AG04450 (cell line): ENCODE measurements at regions of chr10 and their contacts with region 1.

Region 1: GRCh38 chr10:79266543-79267312 is 80.5 kb upstream of the PPIF start:
- DNase-seq: peak; percentile 74
- H3K4me3 ChIP-seq: no peak overlapping the region
- H3K27ac ChIP-seq: peak overlapping the region; percentile 93
- H3K27me3 ChIP-seq: no peaks in the 10 kb centered on the region
- CTCF ChIP-seq: no peak

Region 2: GRCh38 chr10:79238574-79238973 is 28.2 kb before region 1 on chr10:
- CTCF ChIA-PET with region 1: interaction called, 10 read pairs
- POLR2A ChIA-PET with region 1: no interaction called
- DNase-seq: no peak
- H3K4me3 ChIP-seq: no peak overlapping the region
- H3K27ac ChIP-seq: peak overlapping the region; percentile 47
- H3K27me3 ChIP-seq: no peaks in the 10 kb centered on the region
- CTCF ChIP-seq: no peak

Region 3: DNA sequence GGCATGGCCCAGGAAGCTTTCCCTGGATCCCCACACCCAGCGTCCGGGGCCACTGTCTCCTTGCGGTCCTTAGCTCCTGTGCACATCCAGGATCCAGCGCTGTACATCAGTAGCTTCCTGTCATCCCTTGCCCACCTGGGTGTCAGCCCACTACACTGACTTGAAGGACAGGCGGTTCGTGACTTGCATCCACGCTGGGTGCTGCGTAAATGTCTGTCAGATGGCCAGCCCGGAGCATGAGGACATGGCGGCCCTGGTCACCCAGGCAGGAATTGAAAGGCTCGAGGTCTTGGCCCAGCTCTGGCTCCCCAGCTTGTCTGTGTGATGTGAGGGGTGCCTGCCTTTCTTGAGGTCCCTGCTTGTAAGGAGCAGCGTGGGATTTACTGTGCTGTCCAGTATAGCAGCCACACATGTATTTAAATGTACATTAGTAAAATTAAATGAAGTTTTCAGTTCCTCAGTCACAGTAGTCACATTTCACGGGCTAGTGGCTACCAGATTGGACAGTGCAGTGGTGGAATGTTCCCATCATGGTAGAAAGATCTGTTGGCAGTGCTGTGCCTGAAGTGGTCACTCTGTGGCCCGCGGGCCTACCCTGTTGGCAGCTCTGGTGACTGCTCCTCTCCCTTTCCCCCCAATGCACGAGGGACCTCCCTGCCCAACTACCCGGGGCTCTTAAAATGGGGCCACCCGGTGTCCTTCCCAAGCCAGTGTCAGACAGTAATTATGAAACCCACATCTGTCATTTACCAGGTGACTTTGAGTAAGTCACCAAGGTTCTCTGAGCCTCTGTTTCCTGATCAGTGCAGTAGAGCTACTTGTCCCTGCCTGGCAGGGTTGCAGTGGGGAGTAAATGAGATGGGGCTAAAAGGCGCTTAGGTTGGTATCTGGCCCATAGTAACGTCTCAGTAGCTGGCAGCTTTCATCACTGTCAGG is 17.3 kb before region 1 on chr10:
- CTCF ChIA-PET with region 1: no interaction called
- POLR2A ChIA-PET with region 1: no interaction called
- DNase-seq: no peak
- H3K4me3 ChIP-seq: no peak overlapping the region
- H3K27ac ChIP-seq: no peak overlapping the region
- H3K27me3 ChIP-seq: no peaks in the 10 kb centered on the region
- CTCF ChIP-seq: no peak

Region 4: GRCh38 chr10:79292891-79293746 is 26.4 kb after region 1 on chr10:
- CTCF ChIA-PET with region 1: no interaction called
- POLR2A ChIA-PET with region 1: no interaction called
- DNase-seq: no peak
- H3K4me3 ChIP-seq: no peak overlapping the region
- H3K27ac ChIP-seq: peak overlapping the region; percentile 47
- H3K27me3 ChIP-seq: no peaks in the 10 kb centered on the region
- CTCF ChIP-seq: peak; percentile 50